ENCODE measurements at regions of chr3 and their contacts with region 1.

Region 1: GRCh38 chr3:46923559-46924350 is 46.2 kb downstream of the PTH1R start:
- DNase-seq: peak; percentile 57 to 71
- H3K4me3 ChIP-seq: no peak overlapping the region
- H3K27ac ChIP-seq: peak overlapping the region; percentile 25 to 88 (median 81)
- H3K4me1 ChIP-seq: peaks cover 35 to 58% (median 52%) of the 10 kb centered on the region in 4 donors
- H3K27me3 ChIP-seq: no peaks in the 10 kb centered on the region
- CTCF ChIP-seq: peak in 5 of 7 experiments; percentile 56 to 92 (median 70)
- EP300 ChIP-seq: no peak
- POLR2A ChIP-seq: no peak

Region 2: GRCh38 chr3:46998121-46998851 is 74.5 kb after region 1 on chr3:
- intact Hi-C with region 1: loop called (anchors 5 kb)
- DNase-seq: peak; percentile 87 to 94
- H3K4me3 ChIP-seq: no peak overlapping the region
- H3K27ac ChIP-seq: peak overlapping the region in 1 of 5 donors; percentile 30
- H3K4me1 ChIP-seq: peaks cover 0 to 9% (median 8%) of the 10 kb centered on the region in 4 donors
- H3K27me3 ChIP-seq: no peaks in the 10 kb centered on the region
- CTCF ChIP-seq: peak in 6 of 7 experiments; percentile 69 to 98 (median 82)
- EP300 ChIP-seq: no peak
- POLR2A ChIP-seq: no peak

Measured in stomach (tissue), 19 donors.